ENCODE measurements at regions of chr1 and their contacts with region 1.

Region 1: GRCh38 chr1:206935491-206936067 is 10.7 kb downstream of the PIGR start:
- DNase-seq: peak; percentile 68
- H3K4me3 Mint-ChIP-seq: no peak overlapping the region
- H3K27ac Mint-ChIP-seq: no peak overlapping the region
- H3K4me1 Mint-ChIP-seq: peaks cover 15% of the 10 kb centered on the region
- H3K27me3 Mint-ChIP-seq: no peaks in the 10 kb centered on the region

Region 2: DNA sequence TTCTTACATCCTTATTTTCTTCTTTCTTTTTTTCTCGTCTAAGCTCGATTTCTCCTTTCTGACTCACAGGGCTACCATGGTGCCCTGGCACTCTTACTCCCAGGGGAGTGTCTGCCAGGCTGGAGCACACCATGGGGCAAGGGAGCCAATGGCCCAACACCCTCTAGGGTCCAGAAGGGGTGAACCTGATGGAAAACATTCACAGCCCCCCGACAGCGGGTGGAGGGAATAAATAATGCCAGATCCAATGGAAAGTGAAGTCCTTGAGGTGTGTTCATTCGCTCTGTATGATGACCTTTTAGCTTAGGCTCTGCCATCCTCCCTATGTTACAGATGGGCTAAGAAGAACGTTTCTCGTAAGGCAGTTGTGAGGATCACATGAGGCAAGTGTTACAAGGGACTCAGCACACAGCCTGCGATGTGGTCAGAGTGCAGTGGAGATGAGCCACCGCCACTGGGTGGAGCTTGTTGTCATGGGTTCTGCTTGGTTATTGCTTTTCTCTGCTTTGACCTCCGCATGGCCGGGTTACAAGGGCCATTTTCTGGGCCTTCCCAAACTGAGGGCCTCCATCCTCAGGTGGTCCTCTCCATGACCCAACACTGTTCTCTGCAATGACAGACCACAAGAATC is 10.4 kb before region 1 on chr1:
- CTCF ChIA-PET with region 1: interaction called, 13 read pairs
- POLR2A ChIA-PET with region 1: interaction called, 4 read pairs
- DNase-seq: peak; percentile 65
- H3K4me3 Mint-ChIP-seq: no peak overlapping the region
- H3K27ac Mint-ChIP-seq: no peak overlapping the region
- H3K4me1 Mint-ChIP-seq: peaks cover 27% of the 10 kb centered on the region
- H3K27me3 Mint-ChIP-seq: no peaks in the 10 kb centered on the region

Region 3: DNA sequence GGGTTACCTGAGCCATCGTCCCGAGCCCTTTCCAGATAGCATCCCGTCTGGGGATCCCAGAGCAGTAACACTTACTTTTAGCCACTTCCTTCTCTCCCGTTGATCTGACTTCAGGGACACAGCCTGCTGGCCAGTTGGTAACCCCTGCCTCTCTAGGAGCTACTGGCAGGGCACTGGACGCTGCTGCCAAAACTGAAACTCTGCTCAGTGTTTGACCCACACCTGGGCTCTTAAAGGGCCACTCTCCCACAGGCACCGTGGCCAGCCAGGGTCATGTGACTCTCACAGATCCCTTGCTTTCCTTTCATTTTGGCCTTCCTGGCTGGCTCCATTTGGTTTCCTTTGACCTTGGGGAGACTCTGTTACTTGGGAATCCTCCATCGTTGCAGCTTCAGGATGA is 10.7 kb after region 1 on chr1 and contains the start of gene PIGR:
- CTCF ChIA-PET with region 1: interaction called, 20 read pairs
- POLR2A ChIA-PET with region 1: no interaction called
- DNase-seq: no peak
- H3K4me3 Mint-ChIP-seq: no peak within 1 kb of the TSS
- H3K27ac Mint-ChIP-seq: no peak within 1 kb of the TSS
- H3K4me1 Mint-ChIP-seq: no peaks in the 10 kb centered on the region
- H3K27me3 Mint-ChIP-seq: peaks cover 11% of the 10 kb centered on the region
- total RNA-seq, gene PIGR: not detected

Region 4: DNA sequence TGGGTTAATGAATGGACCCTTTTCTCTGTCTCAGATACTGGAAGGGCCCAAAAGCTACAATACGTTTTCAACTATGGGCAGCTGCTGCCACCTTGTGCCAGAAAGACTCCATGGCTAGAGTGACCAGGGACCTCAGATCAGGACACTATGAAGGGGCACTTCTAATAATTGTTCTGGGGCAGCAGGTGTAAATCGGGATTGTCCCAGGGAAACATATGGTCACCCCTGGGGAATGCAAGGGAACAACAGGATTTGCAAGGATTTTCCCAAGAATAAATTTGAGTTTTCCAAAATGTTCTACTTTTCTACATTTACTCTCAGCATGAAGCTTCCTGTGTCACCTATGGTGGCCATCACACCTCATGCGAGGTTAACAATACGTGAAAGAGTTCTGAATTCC is 46.6 kb after region 1 on chr1:
- CTCF ChIA-PET with region 1: interaction called, 11 read pairs
- POLR2A ChIA-PET with region 1: no interaction called
- DNase-seq: peak; percentile 70
- H3K4me3 Mint-ChIP-seq: no peak overlapping the region
- H3K27ac Mint-ChIP-seq: no peak overlapping the region
- H3K4me1 Mint-ChIP-seq: no peaks in the 10 kb centered on the region
- H3K27me3 Mint-ChIP-seq: peaks cover 35% of the 10 kb centered on the region